ENCODE measurements at regions of chr19 and their contacts with region 1.

Region 1: DNA sequence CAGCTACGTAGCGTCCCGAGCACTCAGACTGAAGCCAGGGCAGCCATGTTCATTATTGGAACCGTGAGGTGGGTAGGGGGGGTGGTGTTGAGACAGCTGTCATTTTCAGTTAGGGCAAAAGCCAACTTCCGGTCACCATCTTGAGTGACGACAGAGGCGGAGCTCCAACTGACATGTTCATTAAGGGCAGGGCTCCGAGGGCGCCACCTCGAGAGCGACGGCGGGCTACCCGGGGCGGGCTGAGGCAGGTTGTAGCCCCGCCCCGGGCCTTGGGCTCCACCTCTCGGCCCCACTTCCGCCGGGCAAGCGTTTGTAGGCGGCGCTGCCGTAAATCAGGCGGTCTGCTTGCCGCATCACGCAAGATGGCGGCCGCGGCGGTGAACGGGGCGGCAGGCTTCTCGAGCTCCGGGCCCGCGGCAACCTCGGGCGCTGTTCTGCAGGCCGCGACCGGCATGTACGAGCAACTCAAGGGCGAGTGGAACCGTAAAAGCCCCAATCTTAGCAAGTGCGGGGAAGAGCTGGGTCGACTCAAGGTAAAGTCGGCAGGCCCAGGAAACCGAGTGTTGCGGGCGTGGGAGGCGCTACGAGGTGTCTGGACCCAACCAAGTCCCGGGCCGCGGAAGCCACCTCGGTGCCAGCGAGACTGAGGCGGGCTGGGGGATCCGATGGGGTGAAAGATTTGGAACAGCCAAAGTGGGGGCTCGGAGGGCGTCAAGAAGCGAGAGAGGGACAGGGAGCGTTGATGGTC is at the start of gene PSMD8:
- DNase-seq: peak; percentile 97 to 99 (median 99)
- H3K4me3 ChIP-seq: peak within 1 kb of the TSS; percentile 89
- H3K4me3 Mint-ChIP-seq: peak within 1 kb of the TSS; percentile 97 to 100 (median 98)
- H3K27ac ChIP-seq: peak within 1 kb of the TSS; percentile 91
- H3K27ac Mint-ChIP-seq: peak within 1 kb of the TSS; percentile 93 to 99 (median 98)
- H3K4me1 ChIP-seq: peaks cover 21% of the 10 kb centered on the region
- H3K4me1 Mint-ChIP-seq: peaks cover 29 to 33% (median 31%) of the 10 kb centered on the region in 3 donors
- H3K27me3 ChIP-seq: no peaks in the 10 kb centered on the region
- H3K27me3 Mint-ChIP-seq: peaks cover 6 to 10% of the 10 kb centered on the region in 2 donors
- total RNA-seq, gene PSMD8: 256 to 267 TPM

Region 2: DNA sequence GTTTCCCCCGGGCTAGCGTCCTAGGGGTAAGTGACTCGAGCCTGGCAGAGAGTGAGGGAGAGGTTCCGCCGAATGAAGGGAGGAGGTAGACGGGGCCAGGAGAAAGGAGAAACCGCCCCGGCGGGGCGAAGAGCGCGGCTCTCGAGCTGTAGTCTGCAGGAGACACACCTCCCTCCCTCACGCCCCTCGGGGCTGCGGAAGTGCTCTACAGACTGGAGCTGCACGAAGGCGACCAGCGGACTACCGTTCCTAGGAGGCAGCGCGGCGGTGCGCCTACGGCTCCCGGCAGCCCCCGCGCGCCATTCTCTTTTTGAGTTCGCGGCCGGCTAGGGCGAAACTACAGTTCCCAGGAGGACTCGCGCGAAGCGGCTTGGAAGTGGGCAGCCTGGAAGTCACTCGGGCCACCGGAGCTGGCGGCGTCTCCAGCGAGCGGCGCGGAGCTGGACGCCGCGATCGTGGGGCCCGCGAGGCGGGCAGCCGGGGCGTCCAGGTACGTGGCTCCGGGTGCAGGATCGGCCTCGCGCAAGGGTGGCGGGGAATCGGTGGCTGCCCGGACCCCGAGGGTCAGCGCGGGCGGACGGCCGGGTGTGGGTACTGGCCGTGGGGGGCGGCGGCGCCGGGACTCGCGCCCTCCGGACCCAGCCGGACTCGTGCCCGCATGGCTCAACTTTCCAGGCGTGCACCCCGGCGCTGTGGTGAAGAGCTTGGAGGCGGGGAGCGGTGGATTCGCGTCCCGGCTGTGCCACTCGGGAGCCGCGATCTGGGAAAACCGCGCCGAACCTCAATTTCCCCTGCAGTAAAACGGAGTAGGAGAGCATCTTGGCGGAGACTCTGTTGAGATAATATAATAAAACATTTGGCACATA is 467.5 kb before region 1 on chr19 and contains the start of gene SIPA1L3:
- CTCF ChIA-PET with region 1: interaction called, 6 read pairs
- POLR2A ChIA-PET with region 1: interaction called, 10 read pairs
- DNase-seq: peak; percentile 86 to 93 (median 89)
- H3K4me3 ChIP-seq: peak within 1 kb of the TSS; percentile 99
- H3K4me3 Mint-ChIP-seq: peak within 1 kb of the TSS; percentile 91 to 98 (median 93)
- H3K27ac ChIP-seq: peak within 1 kb of the TSS; percentile 87
- H3K27ac Mint-ChIP-seq: peak within 1 kb of the TSS; percentile 70 to 98 (median 84)
- H3K4me1 ChIP-seq: peaks cover 21% of the 10 kb centered on the region
- H3K4me1 Mint-ChIP-seq: peaks cover 24 to 40% (median 35%) of the 10 kb centered on the region in 3 donors
- H3K27me3 ChIP-seq: no peaks in the 10 kb centered on the region
- H3K27me3 Mint-ChIP-seq: no peaks in the 10 kb centered on the region
- total RNA-seq, gene SIPA1L3: 11.5 to 14.8 TPM

Region 3: GRCh38 chr19:38335949-38336637 is 38.5 kb before region 1 on chr19:
- CTCF ChIA-PET with region 1: interaction called, 34 read pairs
- POLR2A ChIA-PET with region 1: interaction called, 22 read pairs
- DNase-seq: peak; percentile 91 to 94 (median 93)
- H3K4me3 ChIP-seq: peak overlapping the region; percentile 97
- H3K4me3 Mint-ChIP-seq: peak overlapping the region; percentile 88 to 97 (median 95)
- H3K27ac ChIP-seq: peak overlapping the region; percentile 90
- H3K27ac Mint-ChIP-seq: peak overlapping the region; percentile 85 to 100 (median 98)
- H3K4me1 ChIP-seq: peaks cover 5% of the 10 kb centered on the region
- H3K4me1 Mint-ChIP-seq: peaks cover 13 to 17% (median 13%) of the 10 kb centered on the region in 3 donors
- H3K27me3 ChIP-seq: no peaks in the 10 kb centered on the region
- H3K27me3 Mint-ChIP-seq: no peaks in the 10 kb centered on the region

Region 4: GRCh38 chr19:38402967-38403861 is 28.6 kb after region 1 on chr19 and contains the start of gene FAM98C:
- CTCF ChIA-PET with region 1: interaction called, 37 read pairs
- POLR2A ChIA-PET with region 1: interaction called, 25 read pairs
- DNase-seq: peak; percentile 96 to 99 (median 98)
- H3K4me3 ChIP-seq: peak within 1 kb of the TSS; percentile 83
- H3K4me3 Mint-ChIP-seq: peak within 1 kb of the TSS; percentile 89 to 98 (median 92)
- H3K27ac ChIP-seq: peak within 1 kb of the TSS; percentile 67
- H3K27ac Mint-ChIP-seq: peak within 1 kb of the TSS; percentile 80 to 96 (median 93)
- H3K4me1 ChIP-seq: peaks cover 10% of the 10 kb centered on the region
- H3K4me1 Mint-ChIP-seq: peaks cover 13 to 27% (median 20%) of the 10 kb centered on the region in 3 donors
- H3K27me3 ChIP-seq: no peaks in the 10 kb centered on the region
- H3K27me3 Mint-ChIP-seq: peaks cover 0 to 8% of the 10 kb centered on the region in 2 donors
- total RNA-seq, gene FAM98C: 17.8 to 25.2 TPM

Region 5: GRCh38 chr19:38929929-38930775 is 555.5 kb after region 1 on chr19 and contains the start of gene SARS2:
- CTCF ChIA-PET with region 1: interaction called, 10 read pairs
- POLR2A ChIA-PET with region 1: interaction called, 7 read pairs
- DNase-seq: peak; percentile 88 to 97 (median 96)
- H3K4me3 ChIP-seq: peak within 1 kb of the TSS; percentile 96
- H3K4me3 Mint-ChIP-seq: peak within 1 kb of the TSS; percentile 97 to 100 (median 98)
- H3K27ac ChIP-seq: peak within 1 kb of the TSS; percentile 95
- H3K27ac Mint-ChIP-seq: peak within 1 kb of the TSS; percentile 90 to 100 (median 99)
- H3K4me1 ChIP-seq: peaks cover 49% of the 10 kb centered on the region
- H3K4me1 Mint-ChIP-seq: peaks cover 45 to 62% (median 47%) of the 10 kb centered on the region in 3 donors
- H3K27me3 ChIP-seq: no peaks in the 10 kb centered on the region
- H3K27me3 Mint-ChIP-seq: no peaks in the 10 kb centered on the region
- total RNA-seq, gene SARS2: 43.1 to 46.7 TPM

Measured in CD8-positive, alpha-beta memory T cell (primary cell).